ENCODE measurements at regions of chr7 and their contacts with region 1.

Region 1: DNA sequence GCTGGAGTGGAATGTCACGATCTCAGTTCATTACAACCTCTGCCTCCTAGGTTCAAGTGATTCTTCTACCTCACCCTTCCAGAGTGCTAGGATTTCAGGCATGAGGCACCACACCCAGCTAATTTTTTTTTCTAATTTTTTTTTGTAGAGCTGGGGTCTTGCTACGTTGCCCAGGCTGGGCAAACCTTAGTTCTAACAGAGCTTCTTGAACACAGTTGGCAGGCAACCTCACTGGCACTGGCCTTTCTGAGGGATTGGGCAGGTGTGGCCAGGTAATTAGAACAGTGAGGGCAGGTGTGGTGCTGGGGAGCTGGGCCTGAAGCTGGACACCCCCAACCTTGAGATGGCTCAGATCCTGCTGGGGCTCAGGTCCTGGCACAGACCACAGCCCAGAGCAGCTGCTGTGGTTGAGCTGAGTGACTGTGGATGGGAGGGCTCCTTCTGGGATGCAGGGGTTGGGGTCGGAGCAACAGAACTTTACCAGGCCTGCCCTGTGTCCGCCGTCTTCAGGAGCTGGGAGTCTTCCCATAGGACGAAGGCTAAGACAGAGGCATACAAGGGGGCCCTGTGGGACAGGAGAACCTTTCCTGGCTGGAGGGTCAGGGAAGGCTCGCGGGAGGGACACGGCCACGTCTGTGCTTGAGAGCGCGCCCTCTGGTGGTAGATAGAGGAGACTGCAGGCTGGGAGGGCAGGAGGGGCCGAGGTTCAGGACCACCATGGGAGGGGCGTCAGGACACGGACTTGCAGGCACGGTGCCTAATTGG is 48.2 kb downstream of the COL26A1 start:
- DNase-seq: peak; percentile 62
- ATAC-seq: peak; percentile 69
- H3K4me3 Mint-ChIP-seq: no peak overlapping the region
- H3K27ac Mint-ChIP-seq: no peak overlapping the region
- H3K4me1 Mint-ChIP-seq: peaks cover 6% of the 10 kb centered on the region
- H3K27me3 Mint-ChIP-seq: peaks cover 7% of the 10 kb centered on the region

Region 2: GRCh38 chr7:100901921-100902332 is 509.0 kb before region 1 on chr7:
- CTCF ChIA-PET with region 1: no interaction called
- POLR2A ChIA-PET with region 1: no interaction called
- intact Hi-C with region 1: no loop called
- DNase-seq: no peak
- ATAC-seq: no peak
- H3K4me3 Mint-ChIP-seq: no peak overlapping the region
- H3K27ac Mint-ChIP-seq: no peak overlapping the region
- H3K4me1 Mint-ChIP-seq: peaks cover 2% of the 10 kb centered on the region
- H3K27me3 Mint-ChIP-seq: peaks cover 17% of the 10 kb centered on the region

Region 3: DNA sequence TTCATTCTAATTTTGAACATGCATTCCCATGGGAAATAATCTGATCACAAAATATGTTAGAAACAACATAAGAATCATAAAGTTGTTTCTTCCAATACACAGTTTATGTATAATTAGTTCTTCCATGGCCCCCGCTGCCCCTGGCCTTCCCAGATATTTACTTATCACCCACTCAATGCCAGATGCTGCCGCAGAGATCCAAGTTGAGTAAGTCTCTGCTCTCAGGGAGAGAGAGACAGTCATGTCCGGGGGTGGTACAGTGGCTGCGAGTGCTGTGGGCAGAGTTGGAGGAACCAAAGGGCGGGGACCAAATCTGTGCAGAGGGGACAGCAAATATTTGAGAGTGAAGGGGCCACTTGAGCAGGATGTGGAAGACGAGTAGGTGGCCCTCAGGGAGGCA is 11.2 kb before region 1 on chr7:
- CTCF ChIA-PET with region 1: interaction called, 12 read pairs
- POLR2A ChIA-PET with region 1: no interaction called
- intact Hi-C with region 1: no loop called
- DNase-seq: no peak
- ATAC-seq: no peak
- H3K4me3 Mint-ChIP-seq: no peak overlapping the region
- H3K27ac Mint-ChIP-seq: no peak overlapping the region
- H3K4me1 Mint-ChIP-seq: no peaks in the 10 kb centered on the region
- H3K27me3 Mint-ChIP-seq: peaks cover 5% of the 10 kb centered on the region

Measured in activated CD4-positive, alpha-beta T cell treated with anti-CD3 and anti-CD28 coated beads for 36 hours (primary cell).